ENCODE measurements at regions of chr19 and their contacts with region 1.

Region 1: DNA sequence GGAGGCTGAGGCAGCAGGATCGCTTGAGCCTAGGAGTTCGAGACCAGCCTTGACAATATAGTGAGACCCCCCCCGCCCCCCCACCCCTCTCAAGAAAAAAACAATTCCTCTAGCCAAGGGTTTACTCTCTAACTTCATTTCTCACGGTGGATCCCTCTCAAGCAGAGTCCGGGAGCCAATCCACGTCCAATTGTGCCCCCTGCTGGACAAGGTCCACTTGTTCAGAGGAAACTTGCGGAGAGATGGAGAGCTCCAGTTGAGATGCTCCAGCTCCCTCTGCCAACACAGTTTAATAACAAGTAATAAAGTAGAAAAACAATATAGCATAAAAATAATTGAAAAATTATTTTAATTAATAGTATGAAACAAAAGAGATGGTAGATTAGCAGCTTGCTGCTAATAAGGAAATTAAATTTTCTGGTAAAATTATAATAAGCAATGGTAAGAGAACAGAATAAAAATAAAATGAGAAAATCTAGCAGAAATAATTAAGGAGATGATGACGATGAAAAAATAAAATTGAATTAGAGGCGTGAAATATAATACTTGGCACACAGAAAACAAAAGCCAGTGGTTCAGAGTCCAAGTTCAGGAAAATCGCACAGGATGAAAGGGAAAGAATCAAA is 14.5 kb upstream of the SIGLEC14 start:
- H3K4me3 ChIP-seq: no peak overlapping the region
- H3K27ac ChIP-seq: no peak overlapping the region
- H3K4me1 ChIP-seq: no peaks in the 10 kb centered on the region
- CTCF ChIP-seq: no peak

Region 2: GRCh38 chr19:51473009-51473707 is 187.9 kb before region 1 on chr19:
- CTCF ChIA-PET with region 1: interaction called, 104 read pairs
- POLR2A ChIA-PET with region 1: no interaction called
- H3K4me3 ChIP-seq: no peak overlapping the region
- H3K27ac ChIP-seq: no peak overlapping the region
- H3K4me1 ChIP-seq: no peaks in the 10 kb centered on the region
- CTCF ChIP-seq: peak; percentile 71

Region 3: GRCh38 chr19:51607920-51608562 is 53.0 kb before region 1 on chr19:
- CTCF ChIA-PET with region 1: interaction called, 15 read pairs
- POLR2A ChIA-PET with region 1: no interaction called
- H3K4me3 ChIP-seq: no peak overlapping the region
- H3K27ac ChIP-seq: no peak overlapping the region
- H3K4me1 ChIP-seq: no peaks in the 10 kb centered on the region
- CTCF ChIP-seq: peak; percentile 57

Region 4: GRCh38 chr19:51681321-51682168 is 20.5 kb after region 1 on chr19:
- CTCF ChIA-PET with region 1: interaction called, 114 read pairs
- POLR2A ChIA-PET with region 1: no interaction called
- H3K4me3 ChIP-seq: no peak overlapping the region
- H3K27ac ChIP-seq: no peak overlapping the region
- H3K4me1 ChIP-seq: no peaks in the 10 kb centered on the region
- CTCF ChIP-seq: no peak

Region 5: DNA sequence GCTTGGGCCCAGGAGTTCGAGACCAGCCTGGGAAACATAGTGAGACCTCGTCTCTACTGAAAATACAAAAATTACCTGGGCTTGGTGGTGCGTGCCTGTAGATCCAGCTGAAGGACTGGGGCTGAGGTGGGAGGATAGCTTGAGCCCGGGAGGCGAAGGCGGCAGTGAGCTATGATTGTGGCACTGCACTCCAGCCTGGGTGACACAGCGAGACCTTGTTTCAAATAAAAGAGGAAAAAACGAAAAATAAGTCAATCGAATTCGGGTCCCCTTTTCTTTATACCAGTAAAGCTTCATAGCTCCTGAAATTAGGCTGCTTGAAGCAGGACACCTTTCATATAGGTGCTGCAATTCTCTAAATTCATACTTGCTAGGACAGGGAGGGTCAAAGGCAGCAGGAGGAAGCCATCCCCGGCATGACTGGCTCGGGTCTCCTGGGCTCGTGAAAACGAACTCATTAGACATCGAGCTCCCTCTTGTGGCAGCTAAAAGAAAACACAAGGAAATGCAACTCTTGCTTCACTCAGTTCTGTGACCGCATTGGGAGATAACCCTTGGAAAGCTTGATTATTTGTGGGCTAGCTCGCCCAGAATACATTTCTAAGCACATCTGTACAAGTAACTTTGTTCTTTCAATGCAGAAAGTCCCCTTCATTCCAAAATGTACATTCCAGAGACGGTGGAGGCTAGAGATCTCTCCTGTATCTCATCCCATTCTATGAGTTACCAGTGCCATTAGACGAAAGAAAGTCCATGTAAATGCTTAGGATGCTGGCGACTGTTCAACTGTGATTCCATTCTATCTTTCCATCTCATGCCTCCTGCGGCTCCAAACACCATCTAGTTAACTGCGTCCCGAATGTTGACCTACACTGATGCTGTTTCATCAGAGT is 116.7 kb after region 1 on chr19:
- CTCF ChIA-PET with region 1: interaction called, 23 read pairs
- POLR2A ChIA-PET with region 1: no interaction called
- H3K4me3 ChIP-seq: no peak overlapping the region
- H3K27ac ChIP-seq: no peak overlapping the region
- H3K4me1 ChIP-seq: no peaks in the 10 kb centered on the region
- CTCF ChIP-seq: peak; percentile 38; the same call in 1 of the 2 replicates

Region 6: DNA sequence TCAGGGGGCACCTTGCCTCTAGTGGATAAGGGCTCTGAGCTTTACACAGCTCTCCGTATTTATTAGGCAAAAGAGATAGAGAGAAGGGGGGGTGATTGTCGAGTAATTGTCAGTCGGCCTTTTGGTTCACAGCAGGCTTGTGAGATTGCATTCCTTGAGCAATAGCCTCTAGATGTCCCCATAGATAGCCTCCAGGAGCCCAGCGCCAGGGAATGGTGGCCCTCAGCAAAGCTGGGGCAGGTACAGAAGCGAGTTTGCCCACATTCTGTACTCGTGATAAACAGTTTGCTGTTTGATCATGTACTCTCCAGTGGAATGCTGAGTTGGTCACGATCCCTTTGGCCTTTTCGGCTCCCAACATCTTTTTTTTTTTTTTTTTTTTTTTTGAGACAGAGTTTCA is 270.9 kb after region 1 on chr19:
- CTCF ChIA-PET with region 1: no interaction called
- POLR2A ChIA-PET with region 1: no interaction called
- H3K4me3 ChIP-seq: no peak overlapping the region
- H3K27ac ChIP-seq: no peak overlapping the region
- H3K4me1 ChIP-seq: no peaks in the 10 kb centered on the region
- CTCF ChIP-seq: no peak

Measured in HEK293 (cell line).